ENCODE measurements at regions of chr1 and their contacts with region 1.

Region 1: GRCh38 chr1:81834921-81835698 is 34.4 kb downstream of the ADGRL2 start:
- DNase-seq: peak; percentile 52
- H3K4me3 ChIP-seq: no peak overlapping the region
- CTCF ChIP-seq: no peak

Region 2: DNA sequence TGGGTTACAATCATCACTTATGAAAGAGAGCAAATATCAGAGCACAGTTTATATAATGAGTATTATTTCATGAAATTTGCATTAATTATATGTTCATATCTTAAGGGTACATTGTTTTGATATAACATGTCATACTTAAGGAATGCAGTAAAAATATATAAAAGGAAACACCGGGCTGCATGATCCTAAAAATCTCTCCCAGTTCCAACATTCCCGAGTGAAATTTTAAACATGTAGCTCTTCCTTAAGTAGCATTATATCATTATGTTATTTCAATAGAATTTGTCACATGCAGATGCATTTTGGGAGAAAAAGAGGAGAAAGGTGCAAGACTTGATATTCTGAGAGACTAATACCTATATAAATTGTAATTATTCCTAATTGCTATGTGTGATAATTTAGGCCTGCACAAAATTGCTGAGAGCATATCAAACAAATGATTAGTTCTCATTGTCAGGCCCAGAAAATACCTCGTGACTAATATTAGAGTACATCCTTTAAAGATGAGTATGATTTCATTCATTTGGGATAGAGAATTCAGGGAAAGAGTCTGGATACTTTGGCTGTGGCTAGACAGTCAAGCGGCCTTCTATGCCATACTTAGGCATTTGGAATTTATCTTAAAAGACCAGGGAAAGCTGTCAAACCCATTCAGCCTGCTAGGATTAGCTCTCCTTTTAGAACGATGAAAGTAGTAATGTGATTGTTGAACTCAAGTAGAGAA is 52.5 kb after region 1 on chr1:
- in situ Hi-C with region 1: loop called (anchors 5 kb)
- DNase-seq: no peak
- H3K4me3 ChIP-seq: no peak overlapping the region
- CTCF ChIP-seq: no peak

Region 3: GRCh38 chr1:81929106-81929505 is 94.0 kb after region 1 on chr1:
- in situ Hi-C with region 1: loop called (anchors 5 kb)
- DNase-seq: no peak
- H3K4me3 ChIP-seq: no peak overlapping the region
- CTCF ChIP-seq: no peak